Natural killer cell (primary cell): ENCODE measurements at regions of chr1 and their contacts with region 1.

Region 1: DNA sequence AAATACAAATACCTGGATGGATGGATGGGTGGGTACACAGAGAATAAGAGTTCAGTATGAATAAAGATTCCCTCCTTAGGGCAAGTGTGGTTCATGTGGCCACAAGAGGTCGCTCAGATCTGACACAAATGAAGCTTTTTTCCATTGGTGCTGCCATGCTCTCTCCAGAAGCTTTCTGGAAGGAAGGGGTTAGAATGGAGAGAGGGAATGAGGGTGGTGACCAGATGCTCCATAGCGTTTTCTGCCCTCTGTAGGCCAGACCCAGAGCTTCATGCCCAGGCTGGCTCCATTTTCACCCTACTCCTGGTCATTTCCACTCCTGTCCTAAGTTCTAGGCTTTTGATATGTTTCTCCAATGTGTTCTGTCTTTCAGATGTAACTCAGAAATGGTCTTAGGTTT is 3.3 kb upstream of the FCRL6 start:
- DNase-seq: peak; percentile 29 to 79
- ATAC-seq: peak in 1 of 3 donors; percentile 25
- H3K4me3 ChIP-seq: no peak overlapping the region
- H3K4me3 Mint-ChIP-seq: no peak overlapping the region
- H3K27ac ChIP-seq: no peak overlapping the region
- H3K27ac Mint-ChIP-seq: peak overlapping the region; percentile 27 to 90
- H3K4me1 ChIP-seq: peaks cover 49% of the 10 kb centered on the region
- H3K4me1 Mint-ChIP-seq: peaks cover 55 to 58% of the 10 kb centered on the region in 2 donors
- H3K27me3 ChIP-seq: no peaks in the 10 kb centered on the region
- H3K27me3 Mint-ChIP-seq: peaks cover 0 to 13% of the 10 kb centered on the region in 2 donors
- CTCF ChIP-seq: peak; percentile 77

Region 2: GRCh38 chr1:159737238-159737916 is 61.5 kb before region 1 on chr1:
- intact Hi-C with region 1: no loop called
- DNase-seq: no peak
- ATAC-seq: no peak
- H3K4me3 ChIP-seq: no peak overlapping the region
- H3K4me3 Mint-ChIP-seq: no peak overlapping the region
- H3K27ac ChIP-seq: no peak overlapping the region
- H3K27ac Mint-ChIP-seq: no peak overlapping the region
- H3K4me1 ChIP-seq: no peaks in the 10 kb centered on the region
- H3K4me1 Mint-ChIP-seq: no peaks in the 10 kb centered on the region
- H3K27me3 ChIP-seq: no peaks in the 10 kb centered on the region
- H3K27me3 Mint-ChIP-seq: peaks cover 18 to 24% of the 10 kb centered on the region in 2 donors
- CTCF ChIP-seq: no peak

Region 3: GRCh38 chr1:159780583-159781582 is 18.0 kb before region 1 on chr1 and contains the start of gene DUSP23:
- intact Hi-C with region 1: loop called (anchors 1 kb)
- DNase-seq: peak; percentile 91 to 98
- ATAC-seq: peak; percentile 95 to 98 (median 96)
- H3K4me3 ChIP-seq: peak within 1 kb of the TSS; percentile 52
- H3K4me3 Mint-ChIP-seq: peak within 1 kb of the TSS; percentile 87
- H3K27ac ChIP-seq: peak within 1 kb of the TSS; percentile 9
- H3K27ac Mint-ChIP-seq: peak within 1 kb of the TSS; percentile 72 to 76
- H3K4me1 ChIP-seq: peaks cover 10% of the 10 kb centered on the region
- H3K4me1 Mint-ChIP-seq: peaks cover 17 to 38% of the 10 kb centered on the region in 2 donors
- H3K27me3 ChIP-seq: no peaks in the 10 kb centered on the region
- H3K27me3 Mint-ChIP-seq: peaks cover 0 to 6% of the 10 kb centered on the region in 2 donors
- CTCF ChIP-seq: peak; percentile 77
- total RNA-seq, gene DUSP23: 18.6 to 22.1 (median 21.1) TPM

Region 4: GRCh38 chr1:159829273-159829634 is 30.4 kb after region 1 on chr1:
- intact Hi-C with region 1: loop called (anchors 2 kb)
- DNase-seq: peak in 1 of 2 donors; percentile 10
- ATAC-seq: peak in 1 of 3 donors; percentile 25
- H3K4me3 ChIP-seq: no peak overlapping the region
- H3K4me3 Mint-ChIP-seq: peak overlapping the region; percentile 60
- H3K27ac ChIP-seq: no peak overlapping the region
- H3K27ac Mint-ChIP-seq: peak overlapping the region; percentile 45 to 72
- H3K4me1 ChIP-seq: peaks cover 62% of the 10 kb centered on the region
- H3K4me1 Mint-ChIP-seq: peaks cover 62 to 65% of the 10 kb centered on the region in 2 donors
- H3K27me3 ChIP-seq: no peaks in the 10 kb centered on the region
- H3K27me3 Mint-ChIP-seq: peaks cover 20 to 22% of the 10 kb centered on the region in 2 donors
- CTCF ChIP-seq: no peak

Region 5: GRCh38 chr1:159854693-159855192 is 55.9 kb after region 1 on chr1:
- intact Hi-C with region 1: loop called (anchors 5 kb)
- DNase-seq: peak; percentile 60 to 81
- ATAC-seq: peak; percentile 85 to 91 (median 88)
- H3K4me3 ChIP-seq: peak overlapping the region; percentile 57
- H3K4me3 Mint-ChIP-seq: peak overlapping the region; percentile 92
- H3K27ac ChIP-seq: peak overlapping the region; percentile 81
- H3K27ac Mint-ChIP-seq: peak overlapping the region; percentile 43 to 79
- H3K4me1 ChIP-seq: peaks cover 14% of the 10 kb centered on the region
- H3K4me1 Mint-ChIP-seq: peaks cover 15 to 28% of the 10 kb centered on the region in 2 donors
- H3K27me3 ChIP-seq: no peaks in the 10 kb centered on the region
- H3K27me3 Mint-ChIP-seq: peaks cover 0 to 3% of the 10 kb centered on the region in 2 donors
- CTCF ChIP-seq: no peak

Region 6: DNA sequence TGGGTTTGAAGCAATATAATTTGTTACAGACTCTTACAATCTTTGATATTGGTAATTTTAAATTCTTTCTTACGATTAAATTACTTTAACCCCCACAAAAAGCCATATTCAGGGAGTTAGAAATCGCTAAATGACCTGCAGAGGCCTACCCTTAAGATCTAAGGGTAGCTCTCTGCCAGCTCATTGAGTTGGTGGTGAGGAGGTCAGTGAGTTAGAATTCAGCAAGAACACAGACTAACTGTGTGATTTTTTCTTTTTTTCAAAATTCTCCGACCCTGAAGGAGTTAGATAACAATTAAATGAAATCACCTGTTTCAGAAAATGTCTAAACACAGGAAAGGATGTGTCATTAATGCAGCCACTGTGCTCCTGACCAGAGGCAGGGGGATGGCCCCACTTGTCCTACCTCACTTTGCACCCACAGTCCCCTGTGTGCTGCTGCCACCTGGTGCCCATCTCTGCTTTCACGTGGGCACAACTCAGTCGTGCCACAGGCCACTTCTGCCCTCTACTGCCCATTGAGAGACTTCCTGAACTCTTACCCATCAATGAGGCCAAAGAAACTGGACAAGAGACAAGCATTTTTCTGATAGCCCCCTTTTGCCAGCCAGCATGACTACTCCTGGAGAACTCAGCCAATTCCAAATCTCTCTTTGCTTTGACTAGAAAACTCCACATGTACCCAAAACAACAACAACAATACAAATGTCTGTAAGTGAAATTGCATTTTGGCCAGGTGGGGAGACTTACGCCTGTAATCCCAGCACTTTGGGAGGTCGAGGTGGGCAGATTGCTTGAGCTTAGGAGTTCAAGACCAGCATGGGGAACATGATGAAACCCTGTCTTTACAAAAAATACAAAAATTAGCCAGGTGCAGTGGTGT is 92.6 kb after region 1 on chr1:
- intact Hi-C with region 1: loop called (anchors 1 kb)
- DNase-seq: peak; percentile 76 to 90
- ATAC-seq: peak; percentile 96 to 99 (median 97)
- H3K4me3 ChIP-seq: no peak overlapping the region
- H3K4me3 Mint-ChIP-seq: no peak overlapping the region
- H3K27ac ChIP-seq: no peak overlapping the region
- H3K27ac Mint-ChIP-seq: peak overlapping the region; percentile 14 to 37
- H3K4me1 ChIP-seq: peaks cover 28% of the 10 kb centered on the region
- H3K4me1 Mint-ChIP-seq: peaks cover 21 to 30% of the 10 kb centered on the region in 2 donors
- H3K27me3 ChIP-seq: no peaks in the 10 kb centered on the region
- H3K27me3 Mint-ChIP-seq: peaks cover 0 to 5% of the 10 kb centered on the region in 2 donors
- CTCF ChIP-seq: peak; percentile 100

Region 7: DNA sequence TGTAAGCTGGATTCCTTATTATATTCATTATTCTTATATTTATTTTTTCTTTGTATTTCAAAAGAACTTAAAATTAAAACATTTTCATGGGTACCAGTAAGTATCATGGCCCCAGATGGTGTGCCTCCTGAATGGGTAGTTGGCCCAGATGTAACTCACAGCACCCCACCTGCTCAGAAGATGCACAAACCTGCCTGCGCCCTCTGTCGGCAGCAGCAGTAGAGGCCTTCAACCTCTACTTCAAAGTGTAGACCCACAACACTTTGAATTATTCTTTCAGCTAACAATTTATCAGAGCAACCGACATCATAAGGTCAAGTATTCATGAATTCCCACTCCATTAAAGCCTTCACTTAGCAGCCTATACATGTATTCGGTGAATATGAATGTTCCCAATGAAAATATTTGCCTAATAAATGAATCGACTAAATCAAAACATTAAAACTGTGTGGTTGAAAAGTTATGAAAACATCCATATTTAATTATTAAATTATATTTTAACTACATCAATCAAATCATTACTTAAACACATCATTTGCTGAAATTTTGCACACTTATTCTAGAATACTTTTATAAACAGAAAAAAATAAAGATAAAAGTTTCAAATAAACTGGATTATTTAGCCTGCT is 207.5 kb after region 1 on chr1:
- intact Hi-C with region 1: loop called (anchors 10 kb)
- DNase-seq: peak; percentile 55 to 86
- ATAC-seq: peak; percentile 75 to 84 (median 83)
- H3K4me3 ChIP-seq: no peak overlapping the region
- H3K4me3 Mint-ChIP-seq: no peak overlapping the region
- H3K27ac ChIP-seq: no peak overlapping the region
- H3K27ac Mint-ChIP-seq: no peak overlapping the region
- H3K4me1 ChIP-seq: no peaks in the 10 kb centered on the region
- H3K4me1 Mint-ChIP-seq: no peaks in the 10 kb centered on the region
- H3K27me3 ChIP-seq: no peaks in the 10 kb centered on the region
- H3K27me3 Mint-ChIP-seq: peaks cover 8 to 9% of the 10 kb centered on the region in 2 donors
- CTCF ChIP-seq: peak; percentile 75